CD4-positive, alpha-beta memory T cell (primary cell): ENCODE measurements at regions of chr3 and their contacts with region 1.

Region 1: GRCh38 chr3:12994607-12995388 is 78.4 kb downstream of the IQSEC1 start:
- DNase-seq: peak; percentile 84 to 87 (median 85)
- H3K4me3 ChIP-seq: peak overlapping the region; percentile 54 to 84
- H3K4me3 Mint-ChIP-seq: peak overlapping the region; percentile 91 to 97 (median 94)
- H3K27ac ChIP-seq: peak overlapping the region; percentile 69
- H3K27ac Mint-ChIP-seq: peak overlapping the region; percentile 92 to 97 (median 96)
- H3K4me1 ChIP-seq: peaks cover 62% of the 10 kb centered on the region
- H3K4me1 Mint-ChIP-seq: peaks cover 30 to 82% (median 58%) of the 10 kb centered on the region in 4 donors
- H3K27me3 ChIP-seq: no peaks in the 10 kb centered on the region
- H3K27me3 Mint-ChIP-seq: no peaks in the 10 kb centered on the region

Region 2: DNA sequence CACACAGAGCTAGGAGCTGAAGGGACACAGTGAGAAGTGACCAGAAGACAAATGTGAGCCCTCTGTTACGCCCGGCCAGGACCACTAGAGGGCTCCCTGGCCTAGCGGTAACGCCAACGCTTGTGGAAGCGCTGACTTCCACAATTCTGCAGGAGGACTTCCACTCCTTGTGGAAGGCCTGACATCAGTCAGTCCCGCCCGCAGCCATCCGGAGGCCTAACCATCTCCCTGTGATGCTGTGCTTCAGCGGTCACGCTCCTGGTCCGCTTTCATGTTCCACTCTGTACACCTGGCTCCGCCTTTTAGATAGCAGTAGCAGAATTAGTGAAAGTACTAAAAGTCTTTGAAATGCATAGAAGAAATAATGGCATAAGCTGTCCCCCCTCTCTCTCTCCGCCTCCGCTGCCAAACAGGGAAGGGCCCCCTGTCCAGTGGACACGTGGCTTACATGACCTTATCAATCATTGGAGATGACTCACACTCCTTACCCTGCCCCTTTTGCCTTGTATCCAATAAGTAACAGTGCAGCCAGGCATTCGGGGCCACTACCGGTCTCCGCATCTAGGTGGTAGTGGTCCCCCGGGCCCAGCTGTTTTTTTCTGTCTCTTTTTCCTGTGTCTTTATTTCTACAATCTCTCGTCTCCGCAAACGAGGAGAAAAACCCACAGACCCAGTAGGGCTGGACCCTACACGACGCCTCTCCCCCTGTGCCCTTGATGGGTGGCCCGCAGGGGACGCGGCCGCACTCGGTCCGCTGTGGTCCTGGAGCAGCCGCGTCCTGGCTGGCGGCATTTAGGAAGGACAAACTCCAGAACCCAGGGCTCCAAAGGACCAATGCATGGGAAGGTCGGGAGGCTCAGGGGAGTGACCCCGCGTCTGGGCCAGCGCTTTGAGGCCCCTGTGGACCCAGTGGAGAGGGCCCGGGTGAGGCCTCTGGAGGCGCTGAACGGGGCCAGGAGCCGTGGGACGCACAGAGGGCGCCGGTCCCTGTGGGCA is 126.5 kb before region 1 on chr3:
- CTCF ChIA-PET with region 1: no interaction called
- POLR2A ChIA-PET with region 1: no interaction called
- intact Hi-C with region 1: loop called (anchors 2 kb)
- DNase-seq: peak; percentile 42 to 71 (median 56)
- H3K4me3 ChIP-seq: peak overlapping the region; percentile 22 to 36
- H3K4me3 Mint-ChIP-seq: peak overlapping the region; percentile 72 to 92 (median 88)
- H3K27ac ChIP-seq: no peak overlapping the region
- H3K27ac Mint-ChIP-seq: peak overlapping the region in 2 of 7 donors; percentile 10 to 19
- H3K4me1 ChIP-seq: peaks cover 13% of the 10 kb centered on the region
- H3K4me1 Mint-ChIP-seq: peaks cover 7 to 23% (median 11%) of the 10 kb centered on the region in 4 donors
- H3K27me3 ChIP-seq: no peaks in the 10 kb centered on the region
- H3K27me3 Mint-ChIP-seq: peaks cover 9 to 15% of the 10 kb centered on the region in 2 donors

Region 3: DNA sequence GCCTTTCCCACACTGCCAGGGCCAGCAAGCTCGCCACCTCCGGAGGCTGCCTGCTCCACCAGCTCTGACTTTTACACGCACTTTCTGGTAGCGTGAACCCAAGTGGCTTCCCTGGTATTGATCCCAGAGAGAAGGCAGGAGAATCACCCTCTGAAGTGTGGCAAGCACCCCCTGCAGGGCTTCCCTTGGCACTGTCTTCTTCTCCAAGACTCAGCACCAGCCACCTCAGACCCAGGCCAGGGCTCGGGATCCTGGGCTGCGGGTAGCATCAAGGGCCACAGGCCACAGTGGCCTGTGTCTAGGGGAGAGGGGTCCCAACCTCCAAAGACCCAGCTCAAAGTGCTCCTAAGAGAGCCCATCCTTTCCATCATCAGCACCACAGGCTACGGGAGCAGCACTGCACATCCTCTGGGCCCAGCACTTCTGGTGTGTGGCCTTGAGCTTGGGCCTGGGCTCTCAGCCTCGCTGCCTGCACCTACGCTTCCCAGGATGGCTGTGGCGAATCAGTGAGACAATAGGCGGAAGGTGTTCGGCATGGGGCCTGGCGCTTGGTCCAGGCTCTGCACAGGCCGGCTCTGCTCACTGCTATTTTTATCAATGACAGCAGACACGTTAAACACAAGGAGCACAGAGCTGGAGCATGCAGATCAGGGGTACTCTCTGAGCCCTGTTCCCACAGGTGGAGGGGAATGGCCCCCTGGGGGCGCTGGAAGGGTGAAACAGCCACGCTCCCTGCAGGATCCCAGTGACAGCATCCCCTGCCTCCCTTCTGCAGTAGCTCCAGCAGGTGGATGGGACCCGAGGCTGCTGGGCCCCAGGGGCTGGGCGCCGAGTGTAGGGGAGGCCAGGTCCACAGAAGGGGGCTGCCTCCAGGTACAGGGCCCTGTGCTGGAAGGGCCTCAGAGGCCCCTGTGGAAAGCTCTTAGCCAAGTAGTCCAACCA is 63.6 kb before region 1 on chr3:
- CTCF ChIA-PET with region 1: no interaction called
- POLR2A ChIA-PET with region 1: no interaction called
- intact Hi-C with region 1: no loop called
- DNase-seq: no peak
- H3K4me3 ChIP-seq: no peak overlapping the region
- H3K4me3 Mint-ChIP-seq: no peak overlapping the region
- H3K27ac ChIP-seq: no peak overlapping the region
- H3K27ac Mint-ChIP-seq: peak overlapping the region in 2 of 7 donors; percentile 66 to 81
- H3K4me1 ChIP-seq: peaks cover 29% of the 10 kb centered on the region
- H3K4me1 Mint-ChIP-seq: peaks cover 9 to 39% (median 22%) of the 10 kb centered on the region in 4 donors
- H3K27me3 ChIP-seq: no peaks in the 10 kb centered on the region
- H3K27me3 Mint-ChIP-seq: no peaks in the 10 kb centered on the region

Region 4: DNA sequence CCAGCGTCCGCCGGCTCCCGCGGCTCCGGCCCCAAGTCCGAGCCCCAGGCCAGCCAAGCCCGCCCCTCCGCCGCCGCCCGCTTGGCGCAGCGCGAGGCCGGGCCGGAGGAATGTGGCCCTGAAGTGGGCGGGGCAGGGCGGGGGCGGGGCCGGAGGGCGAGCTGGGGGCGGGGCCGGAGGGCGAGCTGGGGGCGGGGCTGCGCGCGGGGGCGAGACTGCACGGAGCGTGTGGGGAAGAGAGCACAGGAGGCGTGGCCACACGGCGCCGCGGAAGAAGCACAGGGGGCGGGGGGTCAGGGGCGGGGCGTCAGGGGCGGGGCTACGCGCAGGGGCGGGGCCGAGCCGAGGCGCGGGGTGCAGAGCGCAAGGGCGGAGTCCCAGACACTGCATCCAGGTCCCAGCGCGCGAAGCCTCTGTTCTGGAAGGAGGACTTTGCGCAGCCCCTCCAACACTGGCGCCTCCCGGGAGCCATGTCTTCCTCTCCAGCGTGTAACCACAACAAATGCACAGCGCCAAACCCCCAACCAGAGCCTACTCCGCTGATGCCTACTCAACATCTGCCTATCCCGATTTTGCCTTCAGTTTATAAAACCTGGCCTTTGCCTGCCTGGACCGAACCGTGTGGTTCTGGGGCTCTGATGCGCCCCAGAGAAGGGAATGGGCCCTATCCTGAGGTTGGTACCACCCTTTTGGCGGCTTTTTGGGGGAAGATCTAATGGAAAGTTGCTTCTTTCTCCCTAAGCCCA is 27.0 kb before region 1 on chr3:
- CTCF ChIA-PET with region 1: interaction called, 10 read pairs
- POLR2A ChIA-PET with region 1: interaction called, 6 read pairs
- intact Hi-C with region 1: loop called (anchors 1 kb)
- DNase-seq: peak; percentile 82 to 89 (median 83)
- H3K4me3 ChIP-seq: peak overlapping the region in 1 of 2 donors; percentile 50
- H3K4me3 Mint-ChIP-seq: peak overlapping the region; percentile 67 to 86 (median 82)
- H3K27ac ChIP-seq: peak overlapping the region; percentile 8
- H3K27ac Mint-ChIP-seq: peak overlapping the region; percentile 27 to 89 (median 78)
- H3K4me1 ChIP-seq: peaks cover 68% of the 10 kb centered on the region
- H3K4me1 Mint-ChIP-seq: peaks cover 47 to 87% (median 65%) of the 10 kb centered on the region in 4 donors
- H3K27me3 ChIP-seq: no peaks in the 10 kb centered on the region
- H3K27me3 Mint-ChIP-seq: no peaks in the 10 kb centered on the region

Region 5: DNA sequence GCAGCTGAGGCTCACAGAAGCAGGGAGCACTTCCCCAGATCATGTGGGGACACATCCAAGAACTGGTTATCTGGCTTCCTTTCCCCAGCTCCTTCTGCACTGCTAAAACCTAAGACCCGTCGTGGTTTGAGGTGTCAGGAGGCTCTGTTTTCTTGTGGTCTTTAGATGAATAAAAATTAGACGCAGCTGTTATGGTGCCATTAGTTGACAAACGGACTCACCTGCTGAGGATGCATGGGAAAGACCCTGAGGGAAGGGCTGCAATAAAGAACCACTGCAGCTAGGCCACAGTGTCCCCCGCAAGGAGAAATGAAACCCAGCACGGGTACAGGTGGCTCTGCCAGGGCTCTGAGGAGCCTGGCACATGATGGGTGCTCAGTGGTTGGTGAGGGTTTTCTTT is 21.0 kb before region 1 on chr3:
- CTCF ChIA-PET with region 1: interaction called, 10 read pairs
- POLR2A ChIA-PET with region 1: interaction called, 6 read pairs
- intact Hi-C with region 1: no loop called
- DNase-seq: no peak
- H3K4me3 ChIP-seq: no peak overlapping the region
- H3K4me3 Mint-ChIP-seq: no peak overlapping the region
- H3K27ac ChIP-seq: no peak overlapping the region
- H3K27ac Mint-ChIP-seq: peak overlapping the region in 2 of 7 donors; percentile 23 to 37
- H3K4me1 ChIP-seq: peaks cover 29% of the 10 kb centered on the region
- H3K4me1 Mint-ChIP-seq: peaks cover 25 to 83% (median 45%) of the 10 kb centered on the region in 4 donors
- H3K27me3 ChIP-seq: no peaks in the 10 kb centered on the region
- H3K27me3 Mint-ChIP-seq: no peaks in the 10 kb centered on the region

Region 6: GRCh38 chr3:13141991-13142412 is 147.2 kb after region 1 on chr3:
- CTCF ChIA-PET with region 1: no interaction called
- POLR2A ChIA-PET with region 1: no interaction called
- intact Hi-C with region 1: no loop called
- DNase-seq: no peak
- H3K4me3 ChIP-seq: no peak overlapping the region
- H3K4me3 Mint-ChIP-seq: no peak overlapping the region
- H3K27ac ChIP-seq: no peak overlapping the region
- H3K27ac Mint-ChIP-seq: no peak overlapping the region
- H3K4me1 ChIP-seq: no peaks in the 10 kb centered on the region
- H3K4me1 Mint-ChIP-seq: no peaks in the 10 kb centered on the region
- H3K27me3 ChIP-seq: no peaks in the 10 kb centered on the region
- H3K27me3 Mint-ChIP-seq: peaks cover 9 to 10% of the 10 kb centered on the region in 2 donors